Posterior vena cava (tissue), 2 donors: ENCODE measurements at regions of chrX and their contacts with region 1.

Region 1: DNA sequence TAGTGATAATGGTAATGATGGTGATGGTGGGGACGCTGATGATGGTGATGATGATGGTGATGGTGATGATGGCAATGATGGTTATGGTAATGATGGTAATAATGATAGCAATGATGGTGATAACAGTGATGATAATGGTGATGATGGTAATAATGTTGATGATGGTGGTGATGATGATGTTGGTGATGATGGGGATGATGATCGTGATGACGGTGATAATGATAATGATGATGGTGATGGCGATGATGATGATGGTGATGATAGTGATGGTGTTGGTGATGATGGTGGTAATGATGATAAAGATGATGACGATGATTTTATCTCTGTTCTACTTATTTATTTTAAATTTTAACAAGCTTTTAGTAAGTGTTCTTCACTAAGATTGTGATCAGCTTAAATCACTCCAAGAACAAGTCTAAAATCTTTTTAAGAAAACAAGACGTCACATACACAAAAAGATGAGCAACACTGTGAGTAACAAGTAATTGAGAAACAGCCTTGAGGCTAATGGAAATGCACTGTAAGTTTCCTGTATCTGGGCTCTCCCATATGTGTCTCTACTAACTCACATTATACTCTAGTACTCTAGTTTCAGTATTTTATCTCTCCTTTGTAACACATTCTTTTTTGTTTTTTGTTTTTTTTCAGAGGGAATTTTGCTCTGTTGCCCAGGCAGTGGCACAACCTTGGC is 480.2 kb upstream of the PRKX start:
- DNase-seq: no peak

Region 2: GRCh38 chrX:3320471-3321046 is 873.1 kb before region 1 on chrX:
- intact Hi-C with region 1: loop called in 1 of 2 experiments (anchors 5 kb)
- DNase-seq: no peak

Region 3: GRCh38 chrX:4129626-4130025 is 64.0 kb before region 1 on chrX:
- intact Hi-C with region 1: no loop called
- DNase-seq: no peak

Region 4: GRCh38 chrX:4150259-4150658 is 43.4 kb before region 1 on chrX:
- intact Hi-C with region 1: no loop called
- DNase-seq: no peak

Region 5: DNA sequence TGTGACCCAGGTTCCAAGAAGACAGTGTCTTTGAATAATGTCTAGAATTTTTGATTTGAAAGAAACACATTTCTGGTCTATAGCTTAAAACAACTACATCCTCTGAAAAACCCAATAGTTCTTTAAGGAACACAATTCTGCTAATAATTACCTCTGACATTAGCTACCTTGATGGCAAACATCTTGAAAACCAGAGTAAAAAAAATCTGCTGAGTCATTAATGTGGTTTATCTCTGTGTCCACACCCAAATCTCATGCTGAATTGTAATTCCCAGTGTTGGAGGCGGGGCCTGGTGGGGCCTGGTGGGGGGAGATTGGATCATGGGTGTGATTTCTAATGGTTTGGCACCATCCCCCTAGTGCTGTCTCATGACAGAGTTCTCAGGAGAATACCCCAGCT is 801.2 kb after region 1 on chrX:
- intact Hi-C with region 1: no loop called
- DNase-seq: no peak